Activated T-helper 2 cell treated with anti-CD3 and anti-CD28 coated beads, Interferon-gamma antibody, Interleukin-2, Interleukin-4, amounts not matched to agents 10 μg/mL and 5 μg/mL and 100 μg/mL, durations not matched to agents 14 hours and 24 hours and 36 hours (primary cell): ENCODE measurements at regions of chr4 and their contacts with region 1.

Region 1: DNA sequence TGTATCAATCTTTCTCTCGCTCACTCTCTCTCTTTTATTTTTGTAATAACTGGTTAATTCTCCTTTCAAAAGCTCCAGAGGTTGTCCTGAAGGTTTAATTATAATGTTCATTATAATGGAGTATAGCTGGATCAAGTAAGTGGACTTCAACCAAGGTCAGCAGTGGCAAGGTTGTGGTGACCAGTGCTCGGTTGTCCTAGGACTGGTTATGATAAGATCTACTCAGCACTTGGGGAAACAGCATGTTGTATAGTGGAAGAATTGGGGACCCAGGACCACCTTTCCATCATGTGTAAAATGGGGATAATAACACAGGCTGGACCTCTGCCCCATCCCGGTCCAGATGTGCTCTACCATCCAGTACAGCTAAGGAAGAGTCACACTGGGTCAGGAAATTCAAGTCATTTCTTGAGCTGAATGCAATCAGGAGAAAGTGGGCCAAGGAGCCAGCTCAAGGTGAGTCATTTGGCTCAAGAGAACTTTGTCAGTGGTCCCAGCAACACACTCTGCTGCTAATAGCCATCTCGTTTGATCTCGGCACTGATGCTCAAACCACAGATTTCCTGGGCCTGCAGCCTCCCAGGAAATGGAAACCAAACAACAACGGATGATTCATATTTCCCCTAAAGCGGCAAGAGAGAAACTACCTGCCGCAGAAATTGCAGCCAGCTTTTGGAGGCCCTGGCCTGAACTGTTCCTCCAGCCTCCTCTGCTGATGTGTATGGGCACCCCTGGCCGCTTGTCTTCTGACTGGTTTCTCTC is 123.6 kb upstream of the RBPJ start:
- DNase-seq: peak; percentile 83
- H3K4me3 Mint-ChIP-seq: peak overlapping the region; percentile 62
- H3K27ac Mint-ChIP-seq: peak overlapping the region; percentile 91
- H3K4me1 Mint-ChIP-seq: peaks cover 70% of the 10 kb centered on the region
- H3K27me3 Mint-ChIP-seq: no peaks in the 10 kb centered on the region

Region 2: GRCh38 chr4:25862411-25863346 is 334.5 kb before region 1 on chr4 and contains the start of gene SEL1L3:
- intact Hi-C with region 1: loop called (anchors 10 kb)
- DNase-seq: peak; percentile 37
- H3K4me3 Mint-ChIP-seq: peak within 1 kb of the TSS; percentile 100
- H3K27ac Mint-ChIP-seq: peak within 1 kb of the TSS; percentile 100
- H3K4me1 Mint-ChIP-seq: peaks cover 37% of the 10 kb centered on the region
- H3K27me3 Mint-ChIP-seq: no peaks in the 10 kb centered on the region
- total RNA-seq, gene SEL1L3: 44.0 and 49.2 TPM in 2 replicates

Region 3: DNA sequence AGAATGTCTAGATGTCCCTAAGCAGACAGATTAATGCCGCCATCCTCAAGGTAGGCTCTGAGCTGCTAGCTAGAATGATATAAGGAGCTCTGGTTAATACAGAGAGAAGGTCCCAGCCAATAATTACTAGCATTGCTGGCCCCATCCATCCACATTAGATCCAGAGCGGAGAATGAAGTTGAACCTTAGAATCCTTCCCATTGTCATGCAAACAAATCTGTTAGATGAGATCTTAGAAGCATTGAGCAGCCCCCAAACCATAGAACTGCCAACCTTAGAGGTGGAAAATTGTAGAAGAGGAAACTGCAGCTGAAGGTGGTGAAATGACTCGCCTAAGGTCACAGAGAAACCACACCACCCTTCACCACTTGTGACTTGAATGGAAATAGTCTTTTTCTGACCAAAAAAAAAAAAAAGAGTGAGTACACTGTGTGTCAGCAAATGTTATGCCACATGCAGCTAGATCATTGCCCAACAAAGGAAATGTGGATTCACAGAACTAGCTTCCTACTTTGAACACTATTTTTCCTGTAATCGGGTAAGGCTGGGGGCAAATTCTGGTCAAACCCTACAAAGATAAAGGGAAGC is 121.1 kb before region 1 on chr4:
- intact Hi-C with region 1: loop called (anchors 1 kb)
- DNase-seq: peak; percentile 65
- H3K4me3 Mint-ChIP-seq: peak overlapping the region; percentile 58
- H3K27ac Mint-ChIP-seq: peak overlapping the region; percentile 99
- H3K4me1 Mint-ChIP-seq: peaks cover 77% of the 10 kb centered on the region
- H3K27me3 Mint-ChIP-seq: no peaks in the 10 kb centered on the region

Region 4: GRCh38 chr4:26130173-26130572 is 67.0 kb before region 1 on chr4:
- intact Hi-C with region 1: loop called (anchors 1 kb)
- DNase-seq: peak; percentile 28
- H3K4me3 Mint-ChIP-seq: peak overlapping the region; percentile 34
- H3K27ac Mint-ChIP-seq: peak overlapping the region; percentile 90
- H3K4me1 Mint-ChIP-seq: peaks cover 81% of the 10 kb centered on the region
- H3K27me3 Mint-ChIP-seq: no peaks in the 10 kb centered on the region

Region 5: GRCh38 chr4:26175006-26175786 is 22.0 kb before region 1 on chr4:
- intact Hi-C with region 1: loop called (anchors 1 kb)
- DNase-seq: no peak
- H3K4me3 Mint-ChIP-seq: no peak overlapping the region
- H3K27ac Mint-ChIP-seq: peak overlapping the region; percentile 91
- H3K4me1 Mint-ChIP-seq: peaks cover 46% of the 10 kb centered on the region
- H3K27me3 Mint-ChIP-seq: no peaks in the 10 kb centered on the region

Region 6: GRCh38 chr4:26319467-26319948 is 122.3 kb after region 1 on chr4:
- intact Hi-C with region 1: loop called (anchors 1 kb)
- DNase-seq: peak; percentile 99
- H3K4me3 Mint-ChIP-seq: peak overlapping the region; percentile 97
- H3K27ac Mint-ChIP-seq: peak overlapping the region; percentile 100
- H3K4me1 Mint-ChIP-seq: peaks cover 29% of the 10 kb centered on the region
- H3K27me3 Mint-ChIP-seq: no peaks in the 10 kb centered on the region